ENCODE measurements at regions of chr20 and their contacts with region 1.

Region 1: DNA sequence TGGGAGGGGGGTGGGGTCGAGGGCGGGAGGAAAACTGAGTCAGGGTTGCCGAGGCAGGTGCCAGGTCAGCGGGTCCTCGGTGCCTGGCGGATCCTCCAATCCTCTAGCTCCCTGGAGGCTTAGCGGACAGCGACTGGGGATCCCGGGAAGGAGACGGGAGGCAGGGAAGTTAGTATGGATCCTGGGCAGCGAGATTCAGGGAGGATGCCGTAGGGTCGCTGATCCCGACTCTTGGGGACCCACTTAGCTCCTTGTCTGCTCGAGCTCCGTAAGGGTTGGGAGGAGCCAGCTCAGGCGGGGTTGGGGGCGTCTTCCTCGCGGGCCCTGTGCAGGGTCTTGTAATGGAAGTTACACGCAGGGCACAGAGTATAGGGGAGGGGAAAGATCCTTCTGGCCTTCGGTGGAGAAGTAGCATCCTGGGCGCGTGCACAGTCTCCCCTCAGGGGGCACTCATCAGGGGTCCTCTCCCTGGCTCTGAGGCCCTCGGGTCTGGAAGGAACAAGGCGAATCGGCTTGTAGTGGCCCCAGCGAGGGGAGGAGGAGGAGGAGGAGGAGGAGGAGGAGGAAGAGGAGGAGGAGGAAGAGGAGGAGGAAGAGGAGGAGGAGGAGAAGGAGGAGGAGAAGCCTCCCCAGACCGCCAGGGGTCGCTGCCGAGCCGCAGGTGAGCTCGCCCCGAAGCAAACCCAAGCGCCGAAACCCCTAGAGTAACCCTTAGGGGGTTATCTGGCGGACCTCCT is 6.4 kb upstream of the SLC12A5 start:
- DNase-seq: peak; percentile 52
- ATAC-seq: peak; percentile 54
- H3K4me3 ChIP-seq: peak overlapping the region; percentile 83 to 88 (median 84)
- H3K27ac ChIP-seq: no peak overlapping the region
- H3K4me1 ChIP-seq: peaks cover 35% of the 10 kb centered on the region
- H3K27me3 ChIP-seq: no peaks in the 10 kb centered on the region
- CTCF ChIP-seq: peak; percentile 96
- EP300 ChIP-seq: no peak
- POLR2A ChIP-seq: no peak
- RAD21 ChIP-seq: peak; percentile 80

Region 2: DNA sequence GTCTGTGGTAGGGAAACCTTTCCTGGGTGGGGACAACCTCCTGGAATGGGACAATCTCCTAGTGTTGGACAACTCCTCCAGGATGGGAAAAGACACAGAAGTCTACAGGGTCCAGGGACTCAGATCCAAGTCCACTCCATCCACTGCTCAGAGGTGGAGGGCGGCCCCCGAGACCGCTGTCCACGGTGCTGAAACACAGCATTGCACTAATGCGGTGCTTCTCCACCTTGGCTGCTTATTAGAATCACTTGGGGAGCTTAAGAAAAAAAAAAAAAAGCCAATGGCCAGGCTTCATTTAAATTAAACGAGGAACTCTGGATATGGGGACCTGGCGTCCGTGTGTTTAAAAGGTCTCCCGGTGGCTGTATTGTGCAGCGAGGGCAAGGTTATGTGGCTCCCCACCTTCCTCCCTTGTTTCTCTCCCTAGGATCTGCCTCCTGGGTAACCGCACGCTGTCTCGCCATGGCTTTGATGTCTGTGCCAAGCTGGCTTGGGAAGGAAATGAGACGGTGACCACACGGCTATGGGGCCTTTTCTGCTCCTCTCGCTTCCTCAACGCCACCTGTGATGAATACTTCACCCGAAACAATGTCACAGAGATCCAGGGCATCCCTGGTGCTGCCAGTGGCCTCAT is 18.4 kb after region 1 on chr20:
- CTCF ChIA-PET with region 1: no interaction called
- POLR2A ChIA-PET with region 1: no interaction called
- in situ Hi-C with region 1: no loop called
- intact Hi-C with region 1: loop called (anchors 1 kb)
- DNase-seq: peak; percentile 47
- ATAC-seq: peak; percentile 87
- H3K4me3 ChIP-seq: no peak overlapping the region
- H3K27ac ChIP-seq: no peak overlapping the region
- H3K4me1 ChIP-seq: no peaks in the 10 kb centered on the region
- H3K27me3 ChIP-seq: no peaks in the 10 kb centered on the region; a peak in 2 of 5 replicates
- CTCF ChIP-seq: no peak
- EP300 ChIP-seq: no peak
- POLR2A ChIP-seq: no peak
- RAD21 ChIP-seq: no peak

Region 3: DNA sequence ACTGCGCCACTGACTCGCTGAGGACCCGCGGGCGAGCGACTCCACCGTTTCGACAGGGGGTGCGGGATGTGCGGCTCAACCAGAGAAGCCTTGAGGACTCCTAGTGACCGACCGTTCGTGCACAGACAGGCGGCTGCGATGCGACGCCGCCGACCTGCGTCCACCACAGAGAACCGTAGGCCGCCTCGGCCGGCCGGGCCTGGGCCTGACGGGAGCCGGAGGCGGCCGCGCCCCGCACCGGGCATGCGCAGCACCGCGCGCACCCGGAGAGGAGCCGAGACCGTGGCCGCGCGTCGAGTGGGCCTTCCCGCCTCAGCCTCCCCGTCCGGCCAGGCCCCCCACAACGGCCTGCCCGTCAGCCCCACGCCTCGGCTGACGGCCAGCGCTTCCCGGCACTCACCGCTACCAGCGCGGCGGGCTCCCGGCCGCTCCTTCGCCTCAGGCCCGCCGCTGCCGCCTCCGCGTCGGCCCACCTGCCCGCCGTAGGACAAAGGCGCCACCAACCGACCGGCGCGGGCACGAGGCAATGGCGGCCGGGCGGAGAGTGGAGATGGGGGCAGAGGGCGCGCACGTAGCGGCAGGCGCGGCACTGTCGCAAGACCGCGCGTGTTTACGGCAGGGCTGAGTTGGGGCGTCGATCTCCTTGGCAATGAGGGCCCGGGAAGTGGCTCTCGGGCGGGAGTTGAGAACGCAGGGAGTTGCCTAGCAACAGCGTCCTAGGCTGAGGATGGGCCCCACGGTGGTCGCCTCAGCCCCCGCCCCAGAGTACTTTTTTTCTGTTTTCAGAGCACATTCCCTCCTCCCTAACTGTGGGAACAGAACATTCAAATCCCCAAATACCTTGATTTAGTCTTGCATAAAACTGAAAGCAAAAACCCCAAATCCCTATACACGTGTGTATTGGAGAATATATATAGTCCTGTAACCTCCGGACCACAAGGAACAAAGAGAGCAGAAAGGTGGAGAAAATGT is 67.1 kb after region 1 on chr20 and contains the start of gene NCOA5:
- CTCF ChIA-PET with region 1: no interaction called
- POLR2A ChIA-PET with region 1: no interaction called
- in situ Hi-C with region 1: loop called (anchors 5 kb)
- intact Hi-C with region 1: loop called (anchors 1 kb)
- DNase-seq: peak; percentile 95
- ATAC-seq: peak; percentile 93
- H3K4me3 ChIP-seq: peak within 1 kb of the TSS; percentile 70 to 98 (median 92)
- H3K27ac ChIP-seq: peak within 1 kb of the TSS; percentile 92
- H3K4me1 ChIP-seq: peaks cover 45% of the 10 kb centered on the region
- H3K27me3 ChIP-seq: no peaks in the 10 kb centered on the region; a peak in 1 of 5 replicates
- CTCF ChIP-seq: peak; percentile 91
- EP300 ChIP-seq: peak; percentile 14 to 40; a peak in 2 of 4 replicates
- POLR2A ChIP-seq: peak; percentile 94 to 96
- RAD21 ChIP-seq: peak; percentile 89
- total RNA-seq, gene NCOA5: 28.4 and 37.7 TPM in 2 replicates

Region 4: GRCh38 chr20:46151936-46152335 is 129.4 kb after region 1 on chr20:
- CTCF ChIA-PET with region 1: interaction called, 14 read pairs
- POLR2A ChIA-PET with region 1: no interaction called
- in situ Hi-C with region 1: no loop called
- intact Hi-C with region 1: no loop called
- DNase-seq: peak; percentile 45
- ATAC-seq: peak; percentile 88
- H3K4me3 ChIP-seq: no peak overlapping the region
- H3K27ac ChIP-seq: no peak overlapping the region
- H3K4me1 ChIP-seq: peaks cover 9% of the 10 kb centered on the region; the same call in 1 of the 2 replicates
- H3K27me3 ChIP-seq: peaks cover 2 to 46% of the 10 kb centered on the region in 2 experiments; a peak in 4 of 5 replicates
- CTCF ChIP-seq: peak; percentile 79
- EP300 ChIP-seq: no peak
- POLR2A ChIP-seq: no peak
- RAD21 ChIP-seq: peak; percentile 72

Region 5: DNA sequence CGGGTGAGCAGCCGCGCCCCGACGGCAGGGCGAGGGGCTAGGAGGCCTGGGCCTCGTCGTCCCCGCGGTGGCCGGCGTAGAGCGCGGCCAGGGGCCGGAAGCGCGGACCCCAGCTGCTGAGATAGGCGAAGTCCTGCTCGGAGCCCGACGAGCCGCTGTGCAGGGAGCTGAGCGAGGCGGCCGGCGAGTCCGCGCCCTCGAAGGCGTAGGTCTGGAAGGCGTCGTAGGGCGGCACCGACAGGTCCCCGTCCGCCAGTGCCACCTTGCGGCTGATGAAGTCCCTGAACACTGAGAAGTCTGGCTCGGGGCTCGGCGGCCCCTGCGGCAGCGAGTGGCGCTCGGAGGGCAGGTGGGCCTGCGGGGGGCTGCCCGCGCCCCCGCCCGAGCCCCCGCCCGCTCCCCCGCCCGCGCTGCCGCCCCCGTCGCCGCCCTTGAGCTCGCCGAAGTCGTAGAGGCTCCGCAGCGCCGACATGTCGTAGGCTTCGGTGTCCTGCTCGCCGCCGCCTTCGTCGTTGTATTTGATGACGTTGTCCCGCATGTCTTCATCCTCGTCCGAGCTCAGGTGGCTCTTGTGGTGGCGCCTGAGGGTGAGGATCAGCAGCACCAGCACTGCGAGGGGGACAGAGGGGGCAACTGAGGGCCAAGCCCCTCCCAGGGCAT is 152.0 kb after region 1 on chr20:
- CTCF ChIA-PET with region 1: interaction called, 4 read pairs
- POLR2A ChIA-PET with region 1: no interaction called
- in situ Hi-C with region 1: loop called (anchors 10 kb)
- intact Hi-C with region 1: loop called (anchors 2 kb)
- DNase-seq: peak; percentile 57
- ATAC-seq: peak; percentile 90
- H3K4me3 ChIP-seq: no peak overlapping the region; a peak in 1 of 6 replicates
- H3K27ac ChIP-seq: no peak overlapping the region
- H3K4me1 ChIP-seq: no peaks in the 10 kb centered on the region
- H3K27me3 ChIP-seq: peaks cover 12 to 82% of the 10 kb centered on the region in 2 experiments; a peak in 4 of 5 replicates
- CTCF ChIP-seq: peak; percentile 87
- EP300 ChIP-seq: no peak
- POLR2A ChIP-seq: no peak
- RAD21 ChIP-seq: peak; percentile 89

Measured in HepG2 (cell line).